ENCODE measurements at regions of chr2 and their contacts with region 1.

Region 1: DNA sequence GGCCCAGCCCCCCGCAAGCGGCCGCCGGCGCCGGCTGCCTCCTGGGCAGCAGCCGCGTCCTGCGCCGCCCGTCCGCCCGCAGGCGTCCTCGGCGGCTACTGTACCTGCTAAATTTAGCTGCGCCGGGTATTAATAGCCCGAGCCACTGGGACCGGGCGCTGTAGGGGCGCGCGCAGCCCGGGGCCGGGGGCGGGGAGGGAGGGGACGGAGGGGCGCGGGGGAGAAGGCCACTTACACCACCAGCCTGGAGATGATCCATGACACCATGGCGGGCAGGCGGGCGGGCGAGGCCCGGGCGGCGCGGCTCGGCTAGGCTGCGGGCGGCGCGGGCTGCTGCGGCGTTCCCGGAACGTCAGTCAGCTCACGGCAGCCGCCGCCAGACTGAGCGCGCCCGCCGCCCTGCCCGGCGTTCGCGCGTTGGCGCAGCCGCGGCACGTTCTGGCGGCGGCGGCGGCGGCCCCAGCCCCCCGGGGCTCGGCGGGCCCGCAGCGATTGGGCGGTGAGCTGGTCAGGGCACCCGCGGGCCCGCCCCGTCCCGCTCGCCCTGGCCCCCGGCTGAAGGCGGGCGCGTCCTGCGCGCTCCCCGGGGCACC is at the start of gene REEP1:
- DNase-seq: peak in 2 of 5 donors; percentile 35 to 36
- H3K4me3 ChIP-seq: peak within 1 kb of the TSS; percentile 32
- H3K27ac ChIP-seq: no peak within 1 kb of the TSS
- H3K4me1 ChIP-seq: no peaks in the 10 kb centered on the region
- H3K27me3 ChIP-seq: no peaks in the 10 kb centered on the region
- CTCF ChIP-seq: no peak
- EP300 ChIP-seq: no peak
- POLR2A ChIP-seq: no peak
- total RNA-seq, gene REEP1: 0.58 to 35.7 (median 2.0) TPM

Region 2: GRCh38 chr2:86417961-86418360 is 80.6 kb after region 1 on chr2:
- intact Hi-C with region 1: loop called in 1 of 4 experiments (anchors 10 kb)
- DNase-seq: no peak
- H3K4me3 ChIP-seq: no peak overlapping the region
- H3K27ac ChIP-seq: no peak overlapping the region
- H3K4me1 ChIP-seq: peaks cover 3% of the 10 kb centered on the region
- H3K27me3 ChIP-seq: no peaks in the 10 kb centered on the region
- CTCF ChIP-seq: no peak
- EP300 ChIP-seq: no peak
- POLR2A ChIP-seq: no peak